Activated T-helper 2 cell treated with anti-CD3 and anti-CD28 coated beads, Interferon-gamma antibody, Interleukin-2, Interleukin-4, amounts not matched to agents 10 μg/mL and 5 μg/mL and 100 μg/mL, durations not matched to agents 14 hours and 24 hours and 36 hours (primary cell): ENCODE measurements at regions of chr3 and their contacts with region 1.

Region 1: GRCh38 chr3:179347345-179348194 is at the start of gene MFN1:
- DNase-seq: peak; percentile 88
- H3K4me3 Mint-ChIP-seq: peak within 1 kb of the TSS; percentile 91
- H3K27ac Mint-ChIP-seq: peak within 1 kb of the TSS; percentile 89
- H3K4me1 Mint-ChIP-seq: peaks cover 15% of the 10 kb centered on the region
- H3K27me3 Mint-ChIP-seq: no peaks in the 10 kb centered on the region
- total RNA-seq, gene MFN1: 32.2 and 38.2 TPM in 2 replicates

Region 2: DNA sequence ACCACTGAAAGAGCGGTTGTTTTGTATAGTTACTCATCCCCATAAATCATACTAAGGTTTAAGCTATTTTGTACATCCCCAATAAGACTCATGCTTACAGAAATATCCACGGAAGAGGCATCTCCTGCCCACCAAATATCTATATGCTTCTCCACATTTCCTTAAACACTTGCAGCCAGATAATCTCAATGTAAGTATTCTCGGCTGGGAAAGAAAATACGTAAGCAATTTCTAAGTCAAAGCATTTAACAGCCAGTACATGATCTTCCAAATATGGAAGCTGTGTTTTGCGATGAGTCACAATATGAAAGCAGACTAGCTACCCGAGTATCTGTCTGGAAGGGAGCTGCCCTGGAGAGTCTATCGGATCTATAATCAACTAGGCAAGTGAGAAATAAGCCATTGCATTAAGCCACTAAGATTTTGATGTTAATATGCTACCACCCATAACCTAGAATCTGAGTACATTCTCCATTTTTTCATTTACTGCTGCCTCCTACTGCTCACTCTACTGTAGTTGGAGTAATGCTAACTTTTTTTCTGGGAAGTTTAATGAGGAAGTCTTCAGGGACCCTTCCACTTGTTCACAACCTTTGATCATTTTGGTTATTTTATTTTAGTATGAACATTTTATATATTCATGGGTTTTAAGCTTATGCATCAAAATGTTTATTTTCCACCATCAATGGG is 249.0 kb before region 1 on chr3:
- intact Hi-C with region 1: no loop called
- DNase-seq: no peak
- H3K4me3 Mint-ChIP-seq: no peak overlapping the region
- H3K27ac Mint-ChIP-seq: no peak overlapping the region
- H3K4me1 Mint-ChIP-seq: peaks cover 4% of the 10 kb centered on the region
- H3K27me3 Mint-ChIP-seq: peaks cover 22% of the 10 kb centered on the region

Region 3: DNA sequence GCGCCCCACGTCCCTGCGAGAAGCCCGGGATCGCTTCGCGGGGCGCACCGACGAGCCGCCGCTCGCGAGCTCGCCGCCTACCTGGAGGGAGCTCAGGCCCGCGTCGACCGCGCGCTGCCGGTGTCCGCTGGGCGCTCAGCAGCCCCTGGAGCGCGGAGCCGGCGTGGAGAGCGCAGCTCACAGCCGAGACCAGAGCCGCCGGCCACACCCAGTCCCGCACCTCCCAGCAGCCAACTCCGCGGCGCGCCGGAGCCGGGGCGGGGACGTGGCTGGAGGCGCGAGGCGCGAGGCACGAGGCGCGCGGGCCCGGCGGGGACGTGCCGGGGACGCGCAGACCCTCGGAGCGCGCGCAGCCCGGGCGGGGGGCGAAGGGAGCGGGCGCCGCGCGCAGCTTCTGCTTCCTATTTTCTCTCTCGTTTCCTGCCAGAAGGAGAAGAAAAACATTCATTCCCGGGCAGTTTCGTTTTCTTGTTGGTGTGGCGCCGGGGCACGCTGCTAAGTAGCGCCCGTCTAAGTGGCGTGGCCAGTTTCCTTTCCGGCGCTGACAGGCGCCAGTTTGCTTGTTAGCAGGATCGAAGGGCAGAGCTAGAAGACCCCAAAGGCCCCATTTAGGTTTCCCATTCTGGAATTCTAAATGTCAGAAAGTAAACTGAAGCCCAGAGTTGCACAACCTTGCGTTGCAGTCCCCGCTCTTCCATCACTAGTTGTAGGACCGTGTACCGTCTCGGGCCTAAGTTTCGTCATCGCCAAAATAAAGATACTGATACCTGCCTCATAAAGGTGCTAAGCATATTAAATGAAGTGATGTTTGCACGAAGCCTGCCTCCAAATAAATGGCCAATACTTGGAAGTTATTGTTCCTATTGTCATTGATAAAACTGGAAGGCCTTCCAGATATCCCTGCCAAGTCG is 104.0 kb after region 1 on chr3 and contains the start of gene GNB4:
- intact Hi-C with region 1: loop called (anchors 5 kb)
- DNase-seq: peak; percentile 54
- H3K4me3 Mint-ChIP-seq: peak within 1 kb of the TSS; percentile 83
- H3K27ac Mint-ChIP-seq: peak within 1 kb of the TSS; percentile 85
- H3K4me1 Mint-ChIP-seq: peaks cover 25% of the 10 kb centered on the region
- H3K27me3 Mint-ChIP-seq: peaks cover 77% of the 10 kb centered on the region
- total RNA-seq, gene GNB4: 12.0 and 13.9 TPM in 2 replicates

Region 4: DNA sequence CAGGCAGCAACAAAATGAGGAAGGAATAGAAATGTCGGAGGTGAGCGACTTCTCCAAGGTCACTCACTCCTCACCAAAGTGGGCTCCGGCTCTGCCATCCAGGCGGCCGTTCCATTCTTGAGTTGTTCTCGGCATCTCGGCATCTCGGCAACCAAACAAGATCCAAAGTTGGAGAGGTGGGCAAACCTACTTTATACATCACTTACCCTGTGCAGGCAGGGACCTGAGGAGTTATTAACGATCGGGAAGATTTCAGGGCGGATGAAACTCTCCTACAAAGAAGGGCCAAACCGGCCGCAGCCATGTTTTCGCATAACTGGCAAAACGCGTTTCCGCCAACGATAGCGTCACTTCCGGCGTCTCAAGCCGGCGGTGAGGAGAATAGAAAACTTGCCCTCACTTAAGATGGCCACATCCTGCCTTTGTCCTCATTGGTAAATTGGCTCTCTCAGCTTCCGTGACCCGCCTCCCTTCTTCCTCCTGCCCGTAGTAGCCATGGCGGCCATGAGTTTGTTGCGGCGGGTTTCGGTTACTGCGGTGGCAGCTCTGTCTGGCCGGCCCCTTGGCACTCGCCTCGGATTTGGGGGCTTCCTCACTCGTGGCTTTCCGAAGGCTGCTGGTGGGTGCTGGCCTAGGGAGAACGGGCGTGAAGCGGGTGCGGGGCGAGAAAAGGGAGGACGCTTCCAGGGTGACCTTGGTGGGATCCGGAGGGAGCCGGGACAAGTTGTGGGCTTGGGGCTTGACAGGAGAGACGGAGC is 256.9 kb after region 1 on chr3 and contains the starts of genes MRPL47 and NDUFB5:
- intact Hi-C with region 1: loop called (anchors 2 kb)
- DNase-seq: peak; percentile 91
- H3K4me3 Mint-ChIP-seq: peak within 1 kb of the TSS; percentile 99
- H3K27ac Mint-ChIP-seq: peak within 1 kb of the TSS; percentile 99
- H3K4me1 Mint-ChIP-seq: peaks cover 31% of the 10 kb centered on the region
- H3K27me3 Mint-ChIP-seq: no peaks in the 10 kb centered on the region
- total RNA-seq, gene MRPL47: 61.2 and 64.4 TPM in 2 replicates
- total RNA-seq, gene NDUFB5: 90.3 and 91.6 TPM in 2 replicates